B cell (primary cell): ENCODE measurements at regions of chr1 and their contacts with region 1.

Region 1: DNA sequence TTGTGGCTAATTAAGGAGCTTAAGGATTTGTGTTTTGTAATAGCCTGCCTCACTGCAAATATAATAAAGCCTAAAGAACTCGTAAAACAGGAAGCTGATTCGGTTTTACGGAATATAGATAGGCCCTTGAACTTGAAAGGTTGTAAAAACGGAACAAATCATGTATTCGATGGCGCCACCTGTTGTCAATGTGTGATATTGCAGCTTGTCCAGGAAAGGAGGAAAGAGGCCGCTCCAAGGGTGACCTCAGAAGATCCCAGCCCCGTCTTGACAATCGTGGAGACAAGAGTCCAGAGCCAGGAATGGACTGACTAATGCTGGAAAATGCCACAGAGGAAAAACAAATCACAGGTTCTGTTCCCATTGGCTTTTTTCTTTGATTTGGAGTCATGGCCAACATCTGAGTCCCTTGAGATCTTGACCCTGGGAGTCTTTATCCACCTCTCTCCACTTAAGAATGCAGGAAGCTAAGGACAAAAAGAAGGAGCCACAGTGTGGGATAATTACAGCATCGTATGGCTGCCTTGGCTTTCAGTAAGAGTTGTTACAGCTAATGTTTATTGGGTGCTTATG is 7.0 kb upstream of the IGSF21 start:
- DNase-seq: peak; percentile 61
- ATAC-seq: peak; percentile 28
- H3K4me3 ChIP-seq: no peak overlapping the region
- H3K4me3 Mint-ChIP-seq: no peak overlapping the region
- H3K27ac ChIP-seq: no peak overlapping the region
- H3K27ac Mint-ChIP-seq: no peak overlapping the region
- H3K4me1 ChIP-seq: no peaks in the 10 kb centered on the region
- H3K4me1 Mint-ChIP-seq: no peaks in the 10 kb centered on the region
- H3K27me3 ChIP-seq: peaks cover 0 to 21% (median 2%) of the 10 kb centered on the region in 4 experiments
- H3K27me3 Mint-ChIP-seq: peaks cover 43% of the 10 kb centered on the region
- CTCF ChIP-seq: peak; percentile 86

Region 2: DNA sequence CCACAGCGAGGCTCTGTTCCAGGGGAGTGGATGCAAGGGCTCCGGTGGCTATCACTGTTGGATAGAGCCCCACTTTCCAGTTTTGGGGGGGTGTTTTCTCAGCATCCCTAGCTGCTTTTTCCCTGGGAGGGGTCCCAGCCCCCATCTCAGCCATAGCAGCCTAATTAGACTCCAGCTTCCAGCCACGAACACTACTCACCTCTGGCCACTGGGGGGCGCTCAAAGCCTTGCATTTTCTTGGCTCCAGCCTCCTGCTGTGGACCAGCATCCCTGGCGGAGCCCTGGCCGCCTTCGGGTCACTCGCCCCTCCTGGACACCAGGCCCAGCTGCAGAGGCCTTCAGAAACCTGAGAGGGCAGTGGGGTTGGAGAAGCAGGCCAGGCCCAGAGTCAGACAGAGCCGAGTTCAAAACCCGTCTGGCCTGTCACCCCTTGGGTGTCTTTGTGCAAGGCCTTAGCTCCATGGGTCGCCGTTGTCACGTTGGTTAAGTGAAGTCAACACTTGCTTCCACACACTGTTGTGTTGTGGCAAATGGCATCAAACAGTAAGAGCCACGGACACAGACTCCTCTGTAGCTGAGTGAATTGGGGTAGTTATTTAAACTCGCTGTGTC is 438.9 kb before region 1 on chr1:
- CTCF ChIA-PET with region 1: interaction called, 17 read pairs
- POLR2A ChIA-PET with region 1: no interaction called
- intact Hi-C with region 1: no loop called
- DNase-seq: peak; percentile 63
- ATAC-seq: peak; percentile 24
- H3K4me3 ChIP-seq: no peak overlapping the region
- H3K4me3 Mint-ChIP-seq: no peak overlapping the region
- H3K27ac ChIP-seq: no peak overlapping the region
- H3K27ac Mint-ChIP-seq: no peak overlapping the region
- H3K4me1 ChIP-seq: no peaks in the 10 kb centered on the region
- H3K4me1 Mint-ChIP-seq: peaks cover 4% of the 10 kb centered on the region
- H3K27me3 ChIP-seq: no peaks in the 10 kb centered on the region
- H3K27me3 Mint-ChIP-seq: no peaks in the 10 kb centered on the region
- CTCF ChIP-seq: peak; percentile 85

Region 3: GRCh38 chr1:17687145-17687544 is 413.4 kb before region 1 on chr1:
- CTCF ChIA-PET with region 1: no interaction called
- POLR2A ChIA-PET with region 1: no interaction called
- intact Hi-C with region 1: no loop called
- DNase-seq: no peak
- ATAC-seq: no peak
- H3K4me3 ChIP-seq: no peak overlapping the region
- H3K4me3 Mint-ChIP-seq: no peak overlapping the region
- H3K27ac ChIP-seq: no peak overlapping the region
- H3K27ac Mint-ChIP-seq: no peak overlapping the region
- H3K4me1 ChIP-seq: no peaks in the 10 kb centered on the region
- H3K4me1 Mint-ChIP-seq: no peaks in the 10 kb centered on the region
- H3K27me3 ChIP-seq: no peaks in the 10 kb centered on the region
- H3K27me3 Mint-ChIP-seq: peaks cover 14% of the 10 kb centered on the region
- CTCF ChIP-seq: no peak

Region 4: DNA sequence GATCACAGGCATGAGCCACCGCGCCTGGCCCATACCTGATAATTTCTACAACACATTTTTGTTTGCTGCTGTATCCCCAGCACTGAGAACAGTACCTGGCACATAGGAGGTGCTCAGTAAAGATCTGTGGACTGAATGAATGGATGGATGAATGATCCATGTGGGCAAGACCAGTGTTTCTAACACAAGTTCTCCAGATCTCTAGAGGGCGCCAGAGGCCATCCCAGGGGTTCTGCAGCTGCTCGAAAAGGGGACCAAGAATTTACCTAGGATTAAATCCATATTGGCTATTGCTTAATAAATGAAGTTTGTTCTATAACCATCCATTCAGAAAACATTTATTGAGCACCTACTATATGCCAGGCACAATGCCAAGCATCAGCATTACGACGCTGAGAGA is 177.7 kb before region 1 on chr1:
- CTCF ChIA-PET with region 1: interaction called, 14 read pairs
- POLR2A ChIA-PET with region 1: no interaction called
- intact Hi-C with region 1: no loop called
- DNase-seq: peak; percentile 15
- ATAC-seq: no peak
- H3K4me3 ChIP-seq: no peak overlapping the region
- H3K4me3 Mint-ChIP-seq: no peak overlapping the region
- H3K27ac ChIP-seq: no peak overlapping the region
- H3K27ac Mint-ChIP-seq: no peak overlapping the region
- H3K4me1 ChIP-seq: no peaks in the 10 kb centered on the region
- H3K4me1 Mint-ChIP-seq: no peaks in the 10 kb centered on the region
- H3K27me3 ChIP-seq: peaks cover 0 to 16% (median 3%) of the 10 kb centered on the region in 4 experiments
- H3K27me3 Mint-ChIP-seq: peaks cover 42% of the 10 kb centered on the region
- CTCF ChIP-seq: peak; percentile 26